ENCODE measurements at regions of chr15 and their contacts with region 1.

Region 1: DNA sequence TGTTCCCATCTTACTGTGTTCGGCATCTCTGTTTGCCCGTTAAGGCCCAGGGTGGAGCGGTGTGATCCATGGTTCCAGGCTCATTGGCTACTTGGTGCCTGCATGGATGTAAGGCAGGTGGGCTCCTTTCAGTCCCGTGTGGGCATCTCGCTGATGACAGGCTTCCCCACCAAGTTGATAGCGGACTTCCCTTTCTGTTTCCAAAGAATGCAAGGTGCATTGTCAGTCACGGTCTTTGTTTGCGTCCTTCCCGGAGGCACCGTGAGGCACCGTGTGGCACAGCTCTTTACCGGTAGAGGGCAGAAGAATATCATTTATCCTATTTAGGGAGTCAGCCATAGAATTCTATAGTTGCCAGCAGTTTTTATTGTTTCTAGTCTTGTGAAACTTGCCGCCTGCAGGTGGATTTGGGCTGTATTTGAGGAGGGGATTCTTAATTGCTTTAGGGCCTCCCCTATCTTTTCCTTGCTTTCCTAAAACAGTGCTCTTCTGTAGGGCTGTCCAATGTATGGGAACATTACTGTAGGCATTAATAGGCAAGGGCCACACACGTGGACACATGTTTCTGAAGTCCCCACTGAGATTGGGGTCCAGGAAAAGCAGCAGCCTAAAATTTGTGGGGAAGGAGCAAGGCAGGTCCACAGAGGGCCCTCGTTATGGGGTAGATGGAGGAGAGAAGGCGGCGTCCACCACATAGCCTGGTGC is 244.1 kb downstream of the SLCO3A1 start:
- DNase-seq: peak in 1 of 2 donors; percentile 21
- ATAC-seq: peak; percentile 69 to 93 (median 77)
- H3K4me3 ChIP-seq: no peak overlapping the region
- H3K27ac ChIP-seq: no peak overlapping the region
- H3K4me1 ChIP-seq: peaks cover 0 to 45% (median 14%) of the 10 kb centered on the region in 9 donors
- H3K27me3 ChIP-seq: no peaks in the 10 kb centered on the region
- CTCF ChIP-seq: peak; percentile 24 to 83 (median 71)

Region 2: DNA sequence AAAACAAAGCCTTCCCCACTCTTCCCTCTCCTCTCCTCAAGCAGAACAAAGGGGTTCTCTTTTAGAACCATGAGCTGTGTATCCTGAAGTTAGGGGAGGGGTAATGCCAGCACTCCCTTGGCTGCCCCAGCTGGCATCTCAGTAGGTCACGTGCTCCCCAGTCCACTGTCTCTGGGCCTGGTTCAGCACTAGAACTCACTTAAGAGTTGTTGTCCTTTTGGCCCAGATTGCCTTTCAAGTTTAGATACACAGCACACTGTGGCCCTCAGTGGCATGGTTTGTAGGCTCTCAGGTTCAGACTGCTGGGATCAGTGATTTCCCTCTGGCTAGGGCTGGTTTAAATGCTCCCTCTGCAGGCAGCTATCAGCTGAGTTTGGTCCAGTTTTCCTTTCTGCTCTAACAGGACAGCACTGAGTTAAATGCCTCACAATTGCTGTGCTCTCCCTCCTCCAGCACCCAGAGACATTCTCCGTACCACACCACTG is 107.7 kb after region 1 on chr15:
- intact Hi-C with region 1: loop called in 8 of 10 experiments (anchors 2 to 5 kb)
- DNase-seq: peak in 1 of 2 donors; percentile 14
- ATAC-seq: peak; percentile 20 to 88 (median 67)
- H3K4me3 ChIP-seq: no peak overlapping the region
- H3K27ac ChIP-seq: no peak overlapping the region
- H3K4me1 ChIP-seq: peaks cover 0 to 10% (median 0%) of the 10 kb centered on the region in 9 donors
- H3K27me3 ChIP-seq: no peaks in the 10 kb centered on the region
- CTCF ChIP-seq: peak in 8 of 9 donors; percentile 17 to 59 (median 40)

Region 3: GRCh38 chr15:92226014-92226612 is 128.5 kb after region 1 on chr15:
- intact Hi-C with region 1: loop called (anchors 1 to 5 kb)
- DNase-seq: no peak
- ATAC-seq: peak in 6 of 8 donors; percentile 31 to 78 (median 68)
- H3K4me3 ChIP-seq: no peak overlapping the region
- H3K27ac ChIP-seq: no peak overlapping the region
- H3K4me1 ChIP-seq: peaks cover 0 to 5% (median 0%) of the 10 kb centered on the region in 9 donors
- H3K27me3 ChIP-seq: peaks cover 0 to 3% (median 0%) of the 10 kb centered on the region in 7 donors
- CTCF ChIP-seq: peak; percentile 8 to 60 (median 53)

Region 4: GRCh38 chr15:92383519-92384326 is 286.1 kb after region 1 on chr15:
- intact Hi-C with region 1: loop called in 4 of 10 experiments (anchors 5 to 10 kb)
- DNase-seq: peak in 1 of 2 donors; percentile 29
- ATAC-seq: no peak
- H3K4me3 ChIP-seq: no peak overlapping the region
- H3K27ac ChIP-seq: no peak overlapping the region
- H3K4me1 ChIP-seq: no peaks in the 10 kb centered on the region
- H3K27me3 ChIP-seq: peaks cover 0 to 34% (median 21%) of the 10 kb centered on the region in 7 donors
- CTCF ChIP-seq: peak; percentile 24 to 65 (median 59)

Region 5: DNA sequence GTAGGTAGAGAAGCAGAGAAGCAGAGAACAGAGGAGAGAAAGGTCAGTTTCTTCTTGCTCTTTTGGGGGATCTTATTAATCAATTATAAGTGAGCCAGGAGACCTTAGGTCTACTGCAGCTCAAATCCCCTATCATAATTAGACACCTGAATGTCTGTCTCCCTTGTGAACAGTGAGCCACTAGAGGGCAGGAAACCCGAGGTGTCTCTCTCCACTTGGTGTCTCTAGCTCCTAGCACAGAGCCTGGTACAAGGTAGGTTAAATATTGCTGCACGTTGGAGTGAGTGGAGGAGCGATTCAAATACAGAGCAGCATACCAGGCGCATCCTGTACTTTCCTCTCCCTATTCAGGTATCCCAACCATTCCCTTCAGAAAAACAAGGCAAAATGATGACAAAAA is 294.0 kb after region 1 on chr15:
- intact Hi-C with region 1: loop called in 4 of 10 experiments (anchors 10 kb)
- DNase-seq: no peak
- ATAC-seq: peak in 5 of 8 donors; percentile 45 to 60 (median 53)
- H3K4me3 ChIP-seq: no peak overlapping the region
- H3K27ac ChIP-seq: no peak overlapping the region
- H3K4me1 ChIP-seq: peaks cover 0 to 22% (median 6%) of the 10 kb centered on the region in 9 donors
- H3K27me3 ChIP-seq: peaks cover 3 to 89% (median 63%) of the 10 kb centered on the region in 7 donors
- CTCF ChIP-seq: peak in 7 of 9 donors; percentile 36 to 60 (median 46)

Region 6: DNA sequence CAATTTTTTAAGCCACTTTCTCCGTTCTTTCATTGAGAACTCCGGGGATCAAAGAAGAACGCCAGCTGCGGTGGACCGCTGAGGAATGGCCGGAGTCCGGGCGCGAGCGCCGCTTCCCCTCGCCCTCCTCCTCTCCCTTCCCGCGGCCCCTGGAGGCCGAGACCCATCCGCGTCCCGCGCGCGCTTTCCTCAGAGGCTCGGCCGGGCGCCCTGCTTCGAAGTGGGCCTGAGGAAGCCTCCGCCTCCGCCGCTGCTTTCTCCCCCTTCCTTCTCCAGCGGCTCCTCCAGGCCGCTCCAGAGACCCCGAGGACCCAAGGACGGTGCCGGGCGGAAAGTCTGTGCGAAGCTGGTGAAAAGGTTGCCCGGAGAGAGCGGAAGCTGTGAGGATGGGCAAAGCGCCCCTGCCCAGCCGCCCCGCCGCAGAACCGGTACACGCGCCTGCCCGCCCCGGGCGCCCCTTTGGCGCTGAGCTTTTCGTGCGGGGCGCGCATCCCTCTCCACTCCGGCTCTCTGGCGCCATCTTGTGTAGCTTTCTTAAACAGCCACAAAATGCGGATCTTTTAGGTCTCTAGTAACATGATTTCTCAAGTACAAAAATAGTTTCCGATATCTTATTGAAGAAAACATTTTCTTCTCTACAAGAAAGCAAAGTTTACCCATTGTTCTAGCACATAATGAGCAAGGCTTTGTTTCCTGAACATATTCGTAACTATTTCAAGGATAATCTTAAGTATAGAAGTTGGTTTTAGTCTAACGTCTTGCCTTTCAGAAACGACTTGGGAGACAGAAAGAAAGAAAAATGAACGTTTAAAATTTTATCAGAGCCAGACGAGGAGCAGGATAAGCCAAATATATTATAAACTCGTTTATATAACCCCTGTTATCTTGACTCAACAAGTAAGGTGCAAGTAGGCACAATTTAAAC is 617.1 kb after region 1 on chr15:
- intact Hi-C with region 1: loop called in 2 of 10 experiments (anchors 10 kb)
- DNase-seq: peak; percentile 68 to 80
- ATAC-seq: peak; percentile 89 to 95 (median 92)
- H3K4me3 ChIP-seq: peak overlapping the region; percentile 39 to 79 (median 62)
- H3K27ac ChIP-seq: peak overlapping the region in 9 of 10 donors; percentile 19 to 76 (median 66)
- H3K4me1 ChIP-seq: peaks cover 0 to 12% (median 4%) of the 10 kb centered on the region in 9 donors
- H3K27me3 ChIP-seq: no peaks in the 10 kb centered on the region
- CTCF ChIP-seq: peak; percentile 86 to 98 (median 93)